ENCODE measurements at regions of chr10 and their contacts with region 1.

Region 1: DNA sequence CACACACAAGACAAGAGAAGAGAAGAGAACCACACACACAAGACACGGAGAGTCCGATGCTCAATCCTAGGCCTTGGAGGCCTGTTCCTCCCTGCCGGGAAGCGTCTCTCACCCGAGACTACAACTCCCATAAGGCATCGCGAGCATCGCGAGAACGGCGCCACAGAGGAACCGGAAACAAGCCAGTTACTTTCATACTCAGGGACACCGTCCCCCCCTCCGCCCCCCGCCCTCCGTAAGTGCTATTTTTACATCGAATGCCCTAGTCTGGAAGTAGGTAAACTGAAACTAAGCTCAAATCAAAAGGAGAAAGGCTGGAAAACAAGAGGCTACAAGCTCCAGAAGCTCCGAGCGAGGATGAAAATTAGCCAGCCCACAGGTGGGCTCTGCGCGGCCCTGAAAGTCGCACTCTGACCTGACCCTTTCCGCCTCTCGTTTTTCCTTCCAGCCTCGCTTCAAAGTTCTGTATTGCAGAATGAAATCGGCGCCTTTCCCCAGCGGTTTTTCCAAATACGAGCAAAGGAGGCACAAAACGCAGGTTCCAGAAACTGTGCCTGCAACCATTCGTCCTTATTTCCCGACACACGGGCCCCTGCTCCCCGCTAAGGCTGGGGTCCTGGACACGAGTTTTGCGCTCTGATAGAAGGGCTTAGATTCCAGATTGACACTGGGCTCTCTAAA is 11.5 kb upstream of the DNAJC12 start:
- DNase-seq: peak; percentile 96
- ATAC-seq: peak; percentile 97
- H3K4me3 Mint-ChIP-seq: peak overlapping the region; percentile 86
- H3K27ac Mint-ChIP-seq: peak overlapping the region; percentile 95
- H3K4me1 Mint-ChIP-seq: peaks cover 12% of the 10 kb centered on the region
- H3K27me3 Mint-ChIP-seq: no peaks in the 10 kb centered on the region

Region 2: DNA sequence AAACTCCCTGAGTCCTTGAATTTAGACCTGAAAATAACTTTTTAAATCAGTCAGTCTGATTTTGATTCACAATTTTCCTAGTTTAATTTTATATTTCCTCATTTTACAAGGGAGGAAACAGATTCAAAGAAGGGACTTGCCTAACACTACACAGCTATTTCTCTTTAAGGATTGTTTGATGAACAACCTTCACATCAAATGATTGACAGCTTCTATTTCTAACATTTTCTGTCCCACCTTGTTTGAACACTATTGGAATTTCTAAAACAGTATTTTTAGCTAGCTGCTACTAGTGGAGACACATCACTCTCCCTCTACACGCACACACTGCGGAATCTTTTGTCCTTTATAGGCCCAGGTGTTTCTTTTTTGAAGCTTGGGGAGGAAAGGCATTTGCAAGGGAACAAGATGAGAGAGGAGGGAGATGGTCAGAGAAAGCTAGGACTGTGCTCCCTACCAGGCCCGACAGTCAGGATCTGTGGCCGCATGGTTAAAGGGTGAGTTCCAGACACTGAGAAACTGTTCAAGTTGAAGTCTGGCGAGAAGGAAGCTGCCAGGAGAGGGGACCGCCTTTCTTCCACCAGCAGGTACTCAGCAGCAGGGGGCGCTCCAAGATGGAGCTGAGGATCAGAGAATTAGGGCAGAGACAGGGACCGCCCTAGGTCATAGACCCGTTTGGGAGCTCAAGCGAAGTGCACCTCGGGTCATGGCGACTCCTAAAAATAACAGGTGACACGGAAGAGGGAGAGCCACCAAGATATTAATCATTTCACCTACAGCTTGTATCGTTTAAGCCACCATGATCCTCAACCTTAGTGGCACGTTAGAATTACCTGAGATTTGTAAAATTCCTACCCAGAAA is 61.2 kb before region 1 on chr10:
- CTCF ChIA-PET with region 1: interaction called, 27 read pairs
- POLR2A ChIA-PET with region 1: no interaction called
- intact Hi-C with region 1: loop called (anchors 1 to 2 kb)
- DNase-seq: peak; percentile 92
- ATAC-seq: peak; percentile 79
- H3K4me3 Mint-ChIP-seq: no peak overlapping the region
- H3K27ac Mint-ChIP-seq: peak overlapping the region; percentile 66
- H3K4me1 Mint-ChIP-seq: peaks cover 35% of the 10 kb centered on the region
- H3K27me3 Mint-ChIP-seq: no peaks in the 10 kb centered on the region

Region 3: DNA sequence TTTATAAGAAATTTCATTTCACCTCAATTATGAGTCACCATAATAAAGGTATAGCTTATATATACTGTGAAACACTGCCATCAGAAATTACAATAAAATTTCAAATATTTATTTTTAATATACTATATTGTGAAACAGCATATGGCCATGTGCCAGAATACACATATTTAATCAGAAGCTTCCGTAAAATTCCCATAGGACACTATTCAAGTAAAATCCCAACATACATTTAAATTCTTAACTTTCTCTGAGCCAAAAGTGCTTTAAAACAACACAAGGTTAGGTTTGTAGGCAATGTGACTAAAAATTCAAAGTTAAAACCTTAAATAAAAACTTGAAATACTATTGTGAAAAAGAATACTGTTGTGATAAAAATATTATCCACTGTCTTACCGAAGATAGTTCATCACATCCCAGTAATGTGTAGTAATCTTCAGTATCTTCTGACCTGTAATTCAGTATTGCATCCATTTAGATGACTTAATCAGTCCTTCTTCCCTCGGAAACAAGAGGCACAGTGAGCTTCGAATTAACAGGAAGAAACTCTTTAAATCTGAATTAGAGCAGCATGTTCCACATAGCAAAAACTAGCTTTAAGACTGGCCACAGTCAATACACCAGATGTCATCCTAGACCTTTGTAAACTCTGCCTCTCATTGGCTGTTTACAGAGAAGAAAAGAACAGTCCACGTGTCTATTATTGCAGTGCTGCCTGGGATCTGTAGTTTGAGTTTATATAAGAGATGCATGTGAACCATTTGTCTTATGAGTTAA is 11.7 kb before region 1 on chr10 and contains the start of gene DNAJC12:
- CTCF ChIA-PET with region 1: interaction called, 3 read pairs
- POLR2A ChIA-PET with region 1: no interaction called
- intact Hi-C with region 1: loop called in 1 of 2 experiments (anchors 1 kb)
- DNase-seq: no peak
- ATAC-seq: peak; percentile 99
- H3K4me3 Mint-ChIP-seq: peak within 1 kb of the TSS; percentile 22
- H3K27ac Mint-ChIP-seq: no peak within 1 kb of the TSS
- H3K4me1 Mint-ChIP-seq: peaks cover 4% of the 10 kb centered on the region
- H3K27me3 Mint-ChIP-seq: no peaks in the 10 kb centered on the region
- total RNA-seq, gene DNAJC12: 6.6 to 7.0 TPM

Region 4: GRCh38 chr10:67884313-67884841 is 34.9 kb after region 1 on chr10 and contains the start of gene SIRT1:
- CTCF ChIA-PET with region 1: interaction called, 7 read pairs
- POLR2A ChIA-PET with region 1: interaction called, 3 read pairs
- intact Hi-C with region 1: loop called (anchors 1 to 2 kb)
- DNase-seq: peak; percentile 93
- ATAC-seq: peak; percentile 74
- H3K4me3 Mint-ChIP-seq: peak within 1 kb of the TSS; percentile 93
- H3K27ac Mint-ChIP-seq: peak within 1 kb of the TSS; percentile 93
- H3K4me1 Mint-ChIP-seq: peaks cover 25% of the 10 kb centered on the region
- H3K27me3 Mint-ChIP-seq: no peaks in the 10 kb centered on the region
- total RNA-seq, gene SIRT1: 19.6 to 23.5 TPM

Region 5: GRCh38 chr10:68156373-68157185 is 307.1 kb after region 1 on chr10:
- CTCF ChIA-PET with region 1: interaction called, 94 read pairs
- POLR2A ChIA-PET with region 1: no interaction called
- intact Hi-C with region 1: no loop called
- DNase-seq: peak; percentile 76
- ATAC-seq: peak; percentile 67
- H3K4me3 Mint-ChIP-seq: no peak overlapping the region
- H3K27ac Mint-ChIP-seq: no peak overlapping the region
- H3K4me1 Mint-ChIP-seq: peaks cover 2% of the 10 kb centered on the region
- H3K27me3 Mint-ChIP-seq: peaks cover 1% of the 10 kb centered on the region

Region 6: GRCh38 chr10:68166871-68167585 is 317.6 kb after region 1 on chr10:
- CTCF ChIA-PET with region 1: no interaction called
- POLR2A ChIA-PET with region 1: no interaction called
- intact Hi-C with region 1: no loop called
- DNase-seq: no peak
- ATAC-seq: no peak
- H3K4me3 Mint-ChIP-seq: no peak overlapping the region
- H3K27ac Mint-ChIP-seq: no peak overlapping the region
- H3K4me1 Mint-ChIP-seq: peaks cover 5% of the 10 kb centered on the region
- H3K27me3 Mint-ChIP-seq: no peaks in the 10 kb centered on the region